ENCODE measurements at regions of chr14 and their contacts with region 1.

Region 1: GRCh38 chr14:32202998-32203882 is at the start of gene RNU6-8:
- DNase-seq: peak; percentile 89 to 95 (median 94)
- H3K4me3 ChIP-seq: peak within 1 kb of the TSS; percentile 50 to 68
- H3K4me3 Mint-ChIP-seq: peak within 1 kb of the TSS; percentile 90 to 96 (median 93)
- H3K27ac ChIP-seq: peak within 1 kb of the TSS; percentile 94
- H3K27ac Mint-ChIP-seq: peak within 1 kb of the TSS; percentile 96 to 100 (median 99)
- H3K4me1 ChIP-seq: peaks cover 23% of the 10 kb centered on the region
- H3K4me1 Mint-ChIP-seq: peaks cover 22 to 41% (median 28%) of the 10 kb centered on the region in 4 donors
- H3K27me3 ChIP-seq: no peaks in the 10 kb centered on the region
- H3K27me3 Mint-ChIP-seq: peaks cover 0 to 2% of the 10 kb centered on the region in 2 donors
- total RNA-seq, gene RNU6-8: not detected

Region 2: GRCh38 chr14:31456841-31457664 is 746.2 kb before region 1 on chr14 and contains the start of gene DTD2:
- CTCF ChIA-PET with region 1: no interaction called
- POLR2A ChIA-PET with region 1: no interaction called
- intact Hi-C with region 1: loop called (anchors 1 kb)
- DNase-seq: peak; percentile 87 to 88 (median 88)
- H3K4me3 ChIP-seq: peak within 1 kb of the TSS; percentile 53 to 69
- H3K4me3 Mint-ChIP-seq: peak within 1 kb of the TSS; percentile 96 to 99 (median 97)
- H3K27ac ChIP-seq: peak within 1 kb of the TSS; percentile 89
- H3K27ac Mint-ChIP-seq: peak within 1 kb of the TSS; percentile 86 to 98 (median 97)
- H3K4me1 ChIP-seq: peaks cover 13% of the 10 kb centered on the region
- H3K4me1 Mint-ChIP-seq: peaks cover 13 to 34% (median 26%) of the 10 kb centered on the region in 4 donors
- H3K27me3 ChIP-seq: no peaks in the 10 kb centered on the region
- H3K27me3 Mint-ChIP-seq: peaks cover 0 to 3% of the 10 kb centered on the region in 2 donors
- total RNA-seq, gene DTD2: 15.1 to 20.2 TPM

Region 3: DNA sequence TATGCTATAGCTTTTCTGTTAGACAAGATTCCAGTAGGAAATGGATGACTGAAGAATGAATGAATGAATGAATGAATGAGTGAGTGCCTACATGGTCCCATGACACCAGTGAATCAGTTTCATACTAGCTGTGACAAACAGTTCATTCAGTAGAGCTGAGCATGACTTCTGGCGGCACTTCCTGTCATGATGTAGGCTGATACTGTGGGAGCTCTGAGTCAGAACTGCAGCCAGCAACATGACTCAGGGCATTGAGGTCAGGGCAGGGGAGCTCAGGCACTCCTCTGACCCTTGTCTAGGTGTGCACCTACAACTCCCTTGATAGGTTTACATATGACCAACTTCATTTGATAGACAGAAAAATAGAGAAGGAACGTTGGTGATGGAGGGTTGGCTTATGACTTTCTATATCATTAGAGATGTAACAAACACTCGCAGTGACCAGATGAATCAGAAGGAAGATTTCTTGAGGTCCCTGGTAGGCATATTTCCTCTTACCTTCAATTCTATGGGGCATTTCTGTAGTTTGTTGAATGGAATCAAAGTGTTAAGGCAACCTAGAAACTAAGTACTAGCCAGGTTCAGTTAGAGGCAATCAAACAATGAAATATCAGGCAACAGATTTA is 265.4 kb before region 1 on chr14:
- CTCF ChIA-PET with region 1: no interaction called
- POLR2A ChIA-PET with region 1: no interaction called
- intact Hi-C with region 1: loop called (anchors 2 kb)
- DNase-seq: peak; percentile 12 to 78 (median 20)
- H3K4me3 ChIP-seq: no peak overlapping the region
- H3K4me3 Mint-ChIP-seq: peak overlapping the region in 1 of 8 donors; percentile 2
- H3K27ac ChIP-seq: no peak overlapping the region
- H3K27ac Mint-ChIP-seq: peak overlapping the region; percentile 57 to 91 (median 80)
- H3K4me1 ChIP-seq: peaks cover 9% of the 10 kb centered on the region
- H3K4me1 Mint-ChIP-seq: peaks cover 11 to 17% (median 16%) of the 10 kb centered on the region in 4 donors
- H3K27me3 ChIP-seq: no peaks in the 10 kb centered on the region
- H3K27me3 Mint-ChIP-seq: no peaks in the 10 kb centered on the region

Region 4: DNA sequence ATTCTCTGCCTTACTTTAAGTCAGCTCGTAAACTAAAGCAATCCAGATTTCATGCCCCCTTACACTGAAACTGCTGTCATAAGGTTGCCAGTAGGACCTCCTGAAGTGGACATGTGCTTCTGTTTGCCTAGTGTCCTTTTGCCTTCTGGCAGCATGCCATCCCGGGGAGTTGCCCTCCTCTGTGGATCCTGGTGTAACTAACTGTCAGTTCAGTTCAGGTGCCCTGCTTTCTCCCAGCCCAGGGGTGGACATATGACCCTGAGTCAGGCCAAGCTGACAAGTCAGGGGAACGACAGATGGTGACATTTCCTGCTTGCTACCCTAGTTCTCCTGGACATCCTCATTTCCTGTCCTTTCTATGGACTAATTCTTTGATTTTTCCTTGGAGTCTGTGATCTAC is 151.5 kb after region 1 on chr14:
- CTCF ChIA-PET with region 1: no interaction called
- POLR2A ChIA-PET with region 1: no interaction called
- intact Hi-C with region 1: no loop called
- DNase-seq: no peak
- H3K4me3 ChIP-seq: no peak overlapping the region
- H3K4me3 Mint-ChIP-seq: no peak overlapping the region
- H3K27ac ChIP-seq: no peak overlapping the region
- H3K27ac Mint-ChIP-seq: no peak overlapping the region
- H3K4me1 ChIP-seq: no peaks in the 10 kb centered on the region
- H3K4me1 Mint-ChIP-seq: no peaks in the 10 kb centered on the region
- H3K27me3 ChIP-seq: no peaks in the 10 kb centered on the region
- H3K27me3 Mint-ChIP-seq: peaks cover 0 to 2% of the 10 kb centered on the region in 2 donors